Mammary epithelial cell (primary cell): ENCODE measurements at regions of chr6 and their contacts with region 1.

Region 1: DNA sequence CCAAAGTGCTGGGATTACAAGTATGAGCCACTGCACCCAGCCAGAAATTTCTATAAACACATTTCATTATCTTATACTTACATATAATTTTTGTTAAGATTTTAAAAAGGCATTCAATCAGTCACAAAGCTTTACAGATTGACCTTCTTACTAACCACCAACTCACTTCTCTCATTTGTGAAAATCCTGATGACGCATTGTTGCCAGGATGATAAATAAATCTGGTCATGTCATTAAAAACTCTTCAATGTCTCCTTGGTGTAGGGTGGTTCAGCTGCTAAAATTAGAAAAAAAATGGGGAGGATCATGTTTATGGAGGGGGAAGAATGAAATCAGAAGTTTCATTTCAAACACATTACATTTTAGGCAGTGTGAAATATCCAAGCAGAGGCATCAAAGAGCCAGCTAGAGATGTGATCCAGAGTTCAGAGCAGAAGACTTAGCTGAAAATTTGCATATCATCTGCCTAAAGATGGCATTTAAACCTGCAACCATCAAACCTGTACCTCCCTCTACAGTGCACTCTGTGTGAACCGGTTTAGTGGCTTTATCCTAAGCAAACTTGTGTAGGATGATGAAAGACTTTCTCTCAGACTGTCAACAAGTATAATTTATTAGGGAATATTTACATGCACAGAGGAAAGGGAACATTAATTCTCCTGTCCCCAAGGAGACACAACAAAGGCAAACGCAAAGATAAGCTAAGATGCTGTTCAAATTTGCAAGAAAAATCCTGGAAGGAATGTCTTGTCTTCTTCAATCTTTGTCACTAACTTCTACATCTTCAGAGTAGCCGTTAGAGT is 84.9 kb upstream of the PLEKHG1 start:
- DNase-seq: no peak
- H3K4me3 ChIP-seq: no peak overlapping the region
- H3K27ac ChIP-seq: no peak overlapping the region
- H3K4me1 ChIP-seq: no peaks in the 10 kb centered on the region
- H3K27me3 ChIP-seq: no peaks in the 10 kb centered on the region
- CTCF ChIP-seq: no peak

Region 2: GRCh38 chr6:150334790-150335783 is 179.7 kb before region 1 on chr6:
- CTCF ChIA-PET with region 1: no interaction called
- dilution Hi-C with region 1: no loop called
- in situ Hi-C with region 1: no loop called
- intact Hi-C with region 1: no loop called
- DNase-seq: peak; percentile 67
- H3K4me3 ChIP-seq: no peak overlapping the region
- H3K27ac ChIP-seq: peak overlapping the region; percentile 59
- H3K4me1 ChIP-seq: peaks cover 26% of the 10 kb centered on the region
- H3K27me3 ChIP-seq: no peaks in the 10 kb centered on the region
- CTCF ChIP-seq: peak; percentile 82 to 88

Region 3: GRCh38 chr6:150430815-150431214 is 84.0 kb before region 1 on chr6:
- CTCF ChIA-PET with region 1: no interaction called
- dilution Hi-C with region 1: loop called (anchors 5 kb)
- in situ Hi-C with region 1: no loop called
- intact Hi-C with region 1: no loop called
- DNase-seq: no peak
- H3K4me3 ChIP-seq: no peak overlapping the region
- H3K27ac ChIP-seq: no peak overlapping the region
- H3K4me1 ChIP-seq: no peaks in the 10 kb centered on the region
- H3K27me3 ChIP-seq: no peaks in the 10 kb centered on the region
- CTCF ChIP-seq: no peak

Region 4: DNA sequence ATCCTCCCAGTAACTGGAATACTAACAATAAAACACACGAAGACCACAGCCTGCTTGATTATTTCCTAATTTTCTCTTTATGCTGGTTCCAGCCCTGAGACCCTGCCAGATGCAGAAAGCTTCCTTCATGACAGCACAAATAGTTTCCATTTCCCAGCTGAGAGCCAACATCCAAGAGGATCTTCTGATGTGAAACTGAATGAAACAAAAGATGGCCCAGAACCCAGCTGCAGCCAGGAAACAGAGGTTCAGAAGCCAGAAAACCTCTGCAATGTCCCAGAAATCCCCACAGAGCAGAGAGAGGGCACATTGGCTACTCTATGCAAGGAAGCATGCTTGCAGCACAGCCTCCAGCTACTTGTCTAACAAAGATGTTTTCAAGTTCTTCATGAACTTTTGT is 23.1 kb after region 1 on chr6:
- CTCF ChIA-PET with region 1: no interaction called
- dilution Hi-C with region 1: no loop called
- in situ Hi-C with region 1: no loop called
- intact Hi-C with region 1: no loop called
- DNase-seq: no peak
- H3K4me3 ChIP-seq: no peak overlapping the region
- H3K27ac ChIP-seq: no peak overlapping the region
- H3K4me1 ChIP-seq: no peaks in the 10 kb centered on the region
- H3K27me3 ChIP-seq: no peaks in the 10 kb centered on the region
- CTCF ChIP-seq: no peak